AG04449 (cell line): ENCODE measurements at regions of chr6 and their contacts with region 1.

Region 1: DNA sequence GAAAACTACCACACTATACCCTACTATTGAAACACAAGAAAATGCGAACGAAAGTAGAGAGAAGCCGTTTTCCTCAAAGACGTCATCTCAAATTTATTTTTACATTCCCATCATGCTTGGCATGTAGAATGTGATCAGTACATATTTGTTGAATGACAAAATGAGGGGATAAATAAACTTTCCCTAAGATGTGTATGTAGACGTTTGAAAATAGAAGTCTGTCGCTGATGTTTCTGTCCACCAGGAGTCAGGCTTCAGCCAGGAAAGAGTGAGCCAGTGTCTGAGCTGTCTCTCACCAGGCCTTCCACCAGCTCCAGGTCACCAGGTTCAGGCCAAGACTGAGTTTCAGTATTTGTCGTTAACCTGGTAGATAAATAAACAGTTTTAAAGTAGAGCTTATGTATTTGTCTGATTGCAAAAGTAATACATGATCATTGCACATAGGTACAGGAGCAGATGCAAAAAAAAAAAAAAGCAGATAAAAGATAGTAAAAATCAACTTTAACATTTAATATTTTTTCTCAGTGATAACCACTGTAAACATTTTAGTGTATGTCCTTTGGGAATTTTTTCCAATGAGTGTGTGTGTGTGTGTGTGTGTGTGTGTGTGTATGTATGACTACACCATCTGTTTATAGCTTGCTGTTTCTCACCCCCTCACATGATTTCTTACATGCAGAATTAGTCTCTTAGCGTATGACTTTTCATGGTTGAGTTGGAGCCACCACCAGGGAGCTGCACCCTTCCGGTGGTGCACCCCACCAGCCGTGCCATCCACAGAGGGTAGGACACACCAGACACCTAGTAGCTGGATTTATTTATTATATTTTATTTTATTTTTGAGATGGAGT is 26.2 kb downstream of the WRNIP1 start:
- DNase-seq: peak; percentile 61
- H3K4me3 ChIP-seq: no peak overlapping the region
- CTCF ChIP-seq: peak; percentile 68

Region 2: GRCh38 chr6:2658788-2659187 is 132.6 kb before region 1 on chr6:
- CTCF ChIA-PET with region 1: no interaction called
- POLR2A ChIA-PET with region 1: no interaction called
- DNase-seq: no peak
- H3K4me3 ChIP-seq: no peak overlapping the region
- CTCF ChIP-seq: no peak

Region 3: GRCh38 chr6:2765166-2765895 is 26.0 kb before region 1 on chr6 and contains the start of gene WRNIP1:
- CTCF ChIA-PET with region 1: interaction called, 38 read pairs
- POLR2A ChIA-PET with region 1: interaction called, 3 read pairs
- DNase-seq: peak; percentile 92
- H3K4me3 ChIP-seq: peak within 1 kb of the TSS; percentile 83
- CTCF ChIP-seq: peak; percentile 73

Region 4: GRCh38 chr6:2807342-2808090 is 16.2 kb after region 1 on chr6:
- CTCF ChIA-PET with region 1: interaction called, 11 read pairs
- POLR2A ChIA-PET with region 1: no interaction called
- DNase-seq: no peak
- H3K4me3 ChIP-seq: no peak overlapping the region
- CTCF ChIP-seq: no peak

Region 5: DNA sequence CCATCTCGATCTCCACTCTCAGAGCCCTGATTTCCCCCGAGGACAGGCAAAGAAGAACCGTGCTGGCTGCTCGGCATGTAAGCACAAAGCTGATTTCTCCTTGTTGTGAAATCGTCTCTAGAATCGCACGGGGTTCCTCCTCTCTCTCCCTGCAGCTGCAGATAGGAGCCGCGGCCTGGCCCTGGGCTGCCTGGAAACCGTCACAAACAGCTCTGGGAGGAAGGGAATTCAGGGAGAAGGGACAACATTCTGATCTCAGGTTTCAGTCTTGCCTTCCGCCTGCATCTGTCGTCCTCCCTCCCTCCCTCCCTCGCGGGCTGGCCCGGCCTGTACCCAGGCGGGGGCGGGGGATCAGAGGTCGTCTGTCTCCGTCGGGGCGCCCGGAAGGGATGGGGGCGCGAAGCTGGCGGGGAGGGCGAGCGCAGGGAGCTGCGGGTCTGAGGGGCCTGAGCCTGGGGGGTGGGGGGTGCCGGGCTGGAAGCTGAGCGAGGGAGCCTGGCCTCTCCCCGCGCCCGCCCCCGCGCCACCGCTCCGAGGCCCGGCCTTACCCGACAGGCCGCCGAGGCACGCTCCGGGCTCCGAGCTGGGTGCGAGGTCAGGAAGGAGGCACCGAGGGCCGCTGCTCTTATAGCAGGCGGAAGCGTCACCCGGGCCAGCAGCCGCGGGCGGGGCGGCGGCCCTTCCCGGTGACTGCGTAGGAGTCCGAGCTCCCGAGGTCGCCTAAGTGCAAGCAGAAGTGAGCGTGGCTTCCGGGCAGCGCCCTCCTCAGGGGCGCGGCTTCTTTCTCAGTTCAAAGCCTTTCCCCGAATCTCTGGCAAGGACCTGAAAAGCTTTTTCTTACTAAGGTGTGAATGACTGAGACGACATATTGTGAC is 50.2 kb after region 1 on chr6 and contains the start of gene SERPINB1:
- CTCF ChIA-PET with region 1: interaction called, 39 read pairs
- POLR2A ChIA-PET with region 1: interaction called, 3 read pairs
- DNase-seq: peak; percentile 72
- H3K4me3 ChIP-seq: peak within 1 kb of the TSS; percentile 55
- CTCF ChIP-seq: no peak

Region 6: DNA sequence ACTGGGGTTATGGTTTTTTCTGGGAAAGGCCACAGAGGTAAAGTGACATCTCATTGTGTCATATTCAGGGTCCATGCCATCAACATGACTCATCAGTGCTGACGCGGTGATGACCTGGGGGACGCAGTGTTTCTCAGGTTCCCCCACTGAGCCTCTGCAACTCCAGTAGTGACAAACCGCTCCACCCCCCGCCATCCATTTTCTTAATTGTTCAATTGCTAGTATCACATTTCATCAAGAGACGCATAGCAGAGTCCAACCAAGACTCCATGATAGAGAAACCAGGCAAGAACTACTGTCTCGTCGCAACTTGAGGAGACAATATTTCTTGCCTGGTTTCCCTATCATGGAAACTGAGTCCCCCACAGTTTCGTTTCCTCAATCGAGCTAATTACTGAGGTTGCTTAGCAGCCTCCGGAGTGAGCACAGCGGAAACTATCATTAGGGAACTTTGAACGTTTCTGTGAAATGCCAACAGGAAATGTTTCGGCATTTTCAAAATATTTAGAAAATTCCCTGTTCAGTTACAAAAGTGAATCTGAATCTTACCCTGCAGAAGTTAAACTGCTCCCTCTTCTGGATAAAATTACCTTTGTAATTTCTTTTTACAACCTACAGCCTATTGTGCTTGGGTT is 62.5 kb after region 1 on chr6:
- CTCF ChIA-PET with region 1: interaction called, 65 read pairs
- POLR2A ChIA-PET with region 1: no interaction called
- DNase-seq: peak; percentile 41
- H3K4me3 ChIP-seq: peak overlapping the region; percentile 57
- CTCF ChIP-seq: peak; percentile 2